Upper lobe of right lung (tissue), 1 donor: ENCODE measurements at regions of chr1 and their contacts with region 1.

Region 1: GRCh38 chr1:150469291-150469690 is 17.9 kb upstream of the TARS2 start:
- DNase-seq: no peak
- ATAC-seq: no peak
- H3K4me3 ChIP-seq: no peak overlapping the region
- H3K27ac ChIP-seq: no peak overlapping the region
- H3K4me1 ChIP-seq: peaks cover 6% of the 10 kb centered on the region
- H3K27me3 ChIP-seq: no peaks in the 10 kb centered on the region
- CTCF ChIP-seq: no peak

Region 2: DNA sequence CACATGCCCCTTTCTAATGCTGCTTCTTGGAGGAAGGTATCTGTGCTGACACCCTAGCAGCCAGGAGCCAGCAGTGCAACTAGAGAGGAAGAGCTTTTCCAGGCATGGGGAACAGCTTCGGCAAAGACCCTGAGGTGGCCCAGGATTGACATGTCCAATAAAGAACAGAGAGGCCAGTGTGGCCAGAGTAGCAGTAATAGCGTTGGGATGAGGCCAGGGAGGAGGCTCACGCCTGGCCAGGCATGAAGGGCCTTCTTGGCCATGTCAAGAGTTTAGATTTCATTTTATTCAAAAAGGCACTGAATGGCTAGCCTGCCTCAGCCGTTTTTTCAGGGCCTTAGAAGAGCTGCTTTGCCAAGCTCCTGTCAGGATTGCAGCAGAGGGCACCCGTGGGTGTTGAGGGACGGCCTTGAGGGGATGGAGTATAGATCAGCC is 63.6 kb after region 1 on chr1:
- intact Hi-C with region 1: loop called (anchors 5 kb)
- DNase-seq: no peak
- ATAC-seq: no peak
- H3K4me3 ChIP-seq: no peak overlapping the region
- H3K27ac ChIP-seq: no peak overlapping the region
- H3K4me1 ChIP-seq: no peaks in the 10 kb centered on the region
- H3K27me3 ChIP-seq: no peaks in the 10 kb centered on the region
- CTCF ChIP-seq: no peak

Region 3: DNA sequence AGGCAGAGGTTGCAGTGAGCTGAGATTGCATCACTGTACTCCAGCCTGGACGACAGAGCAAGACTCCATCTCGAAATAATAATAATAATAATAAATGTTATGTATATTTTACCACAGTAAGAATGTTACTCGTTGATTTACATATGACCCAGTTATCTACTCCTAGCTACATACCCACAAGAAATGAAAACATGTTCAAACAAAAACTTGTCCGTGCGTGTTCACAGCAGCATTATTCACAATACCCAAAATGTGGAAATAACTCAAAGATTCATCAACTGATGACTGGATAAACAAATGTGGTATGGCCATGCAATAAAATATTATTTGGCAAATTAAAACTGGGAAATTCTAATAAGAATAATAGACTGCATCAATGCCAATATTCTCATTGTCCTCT is 191.9 kb after region 1 on chr1:
- intact Hi-C with region 1: no loop called
- DNase-seq: no peak
- ATAC-seq: no peak
- H3K4me3 ChIP-seq: no peak overlapping the region
- H3K27ac ChIP-seq: no peak overlapping the region
- H3K4me1 ChIP-seq: no peaks in the 10 kb centered on the region
- H3K27me3 ChIP-seq: no peaks in the 10 kb centered on the region
- CTCF ChIP-seq: no peak